Calu3 (cell line): ENCODE measurements at regions of chr1 and their contacts with region 1.

Region 1: DNA sequence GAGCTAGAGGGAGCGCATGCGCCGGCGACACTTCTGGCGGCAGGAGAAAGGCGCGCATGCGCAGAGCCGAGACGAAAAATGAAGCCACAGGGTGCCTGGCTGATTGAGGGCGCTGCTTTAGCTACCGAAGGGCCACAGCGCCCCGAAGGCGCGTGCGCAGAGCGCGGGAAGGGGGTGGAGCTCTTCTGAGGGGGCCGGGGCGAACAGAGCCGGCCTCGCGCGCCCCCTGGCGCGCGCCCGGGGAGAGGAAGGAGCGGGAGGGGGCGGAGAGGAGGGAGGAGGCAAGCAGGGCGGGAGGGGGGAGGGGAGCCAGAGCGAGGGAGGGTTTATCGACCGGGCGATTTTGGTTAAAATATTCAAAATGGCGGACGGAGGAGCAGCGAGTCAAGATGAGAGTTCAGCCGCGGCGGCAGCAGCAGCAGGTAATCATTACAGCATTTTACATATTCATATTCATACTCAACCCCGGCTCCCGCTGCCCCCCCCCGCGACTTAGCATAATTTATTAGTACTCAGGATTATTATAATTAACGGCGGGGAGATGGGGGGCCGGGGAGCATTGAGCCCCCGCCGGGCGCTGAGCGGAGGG is at the start of gene POU2F1:
- DNase-seq: peak; percentile 98
- H3K4me3 Mint-ChIP-seq: peak within 1 kb of the TSS; percentile 79
- H3K27ac Mint-ChIP-seq: peak within 1 kb of the TSS; percentile 87
- H3K4me1 Mint-ChIP-seq: peaks cover 25% of the 10 kb centered on the region
- H3K27me3 Mint-ChIP-seq: no peaks in the 10 kb centered on the region
- CTCF ChIP-seq: peak; percentile 63
- total RNA-seq, gene POU2F1: 25.3 and 25.4 TPM in 2 replicates

Region 2: DNA sequence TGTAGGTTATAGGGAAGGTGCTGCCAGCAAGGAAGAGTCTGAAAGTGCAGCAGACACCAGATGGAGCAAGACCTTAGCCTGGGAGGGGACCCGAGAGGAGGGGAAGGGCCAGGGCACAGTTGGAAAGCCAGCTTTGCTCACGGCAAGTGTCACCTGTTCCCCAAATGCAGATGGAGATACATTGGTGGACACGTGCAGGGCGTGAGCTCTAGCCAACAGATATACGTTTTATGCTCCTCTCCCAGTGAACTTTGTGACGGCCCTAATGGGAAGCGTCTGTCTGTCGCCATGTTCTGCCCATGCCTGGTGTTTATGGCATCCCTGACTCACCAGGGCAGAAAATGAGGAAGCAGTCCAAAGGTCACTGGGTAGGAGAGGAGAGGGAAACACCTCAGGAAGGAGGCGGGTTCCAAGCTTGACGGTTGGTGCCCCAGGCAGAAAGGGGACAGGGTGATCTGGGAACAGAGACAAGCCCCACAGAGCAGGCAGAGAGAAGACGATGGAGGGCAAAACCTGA is 138.1 kb before region 1 on chr1:
- CTCF ChIA-PET with region 1: interaction called, 4 read pairs
- intact Hi-C with region 1: loop called (anchors 5 kb)
- DNase-seq: peak; percentile 77
- H3K4me3 Mint-ChIP-seq: no peak overlapping the region
- H3K27ac Mint-ChIP-seq: no peak overlapping the region
- H3K4me1 Mint-ChIP-seq: peaks cover 13% of the 10 kb centered on the region
- H3K27me3 Mint-ChIP-seq: no peaks in the 10 kb centered on the region
- CTCF ChIP-seq: no peak

Region 3: DNA sequence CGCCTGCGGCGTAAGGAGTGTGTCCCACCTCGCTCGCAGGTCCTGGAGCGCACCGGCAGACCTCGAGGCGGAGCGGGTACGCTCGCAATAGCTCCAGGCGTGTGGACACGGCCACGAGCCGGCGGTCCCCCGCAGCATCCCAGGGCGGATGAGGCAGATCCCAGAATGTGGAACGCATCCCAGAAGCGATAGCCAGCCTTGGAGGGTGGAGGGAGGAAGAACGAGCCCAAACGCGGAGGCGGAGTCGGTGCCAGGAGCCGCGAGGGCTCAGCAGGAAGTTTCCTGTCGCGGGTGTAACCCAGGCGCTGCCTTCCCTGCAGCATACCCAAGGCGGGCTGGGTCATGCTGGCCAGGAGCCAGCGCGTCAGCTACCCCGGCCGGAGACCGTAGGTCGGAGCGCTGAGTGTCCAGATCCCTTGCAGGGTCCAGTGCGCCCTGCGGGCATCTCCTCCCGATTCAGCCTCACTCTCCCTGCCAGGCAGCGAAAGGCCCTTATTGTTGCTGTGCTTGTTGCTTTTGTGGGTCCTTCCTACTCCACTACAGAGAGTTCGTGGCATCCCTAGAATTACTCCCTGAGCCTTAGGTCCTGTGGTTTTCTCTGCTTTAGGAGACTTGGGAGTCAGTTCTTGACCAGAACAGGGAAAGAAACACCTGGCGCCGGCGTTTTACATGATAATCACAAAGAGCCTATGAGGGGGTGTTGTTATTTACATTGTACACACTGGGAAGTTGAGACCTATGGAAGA is 99.1 kb before region 1 on chr1:
- CTCF ChIA-PET with region 1: interaction called, 6 read pairs
- intact Hi-C with region 1: loop called (anchors 1 kb)
- DNase-seq: peak; percentile 84
- H3K4me3 Mint-ChIP-seq: peak overlapping the region; percentile 78
- H3K27ac Mint-ChIP-seq: peak overlapping the region; percentile 17
- H3K4me1 Mint-ChIP-seq: peaks cover 24% of the 10 kb centered on the region
- H3K27me3 Mint-ChIP-seq: peaks cover 15% of the 10 kb centered on the region
- CTCF ChIP-seq: no peak

Region 4: GRCh38 chr1:167165948-167166689 is 54.5 kb before region 1 on chr1:
- CTCF ChIA-PET with region 1: interaction called, 10 read pairs
- intact Hi-C with region 1: loop called (anchors 5 kb)
- DNase-seq: no peak
- H3K4me3 Mint-ChIP-seq: no peak overlapping the region
- H3K27ac Mint-ChIP-seq: no peak overlapping the region
- H3K4me1 Mint-ChIP-seq: peaks cover 26% of the 10 kb centered on the region
- H3K27me3 Mint-ChIP-seq: no peaks in the 10 kb centered on the region
- CTCF ChIP-seq: no peak

Region 5: GRCh38 chr1:167375939-167376338 is 155.3 kb after region 1 on chr1:
- CTCF ChIA-PET with region 1: no interaction called
- intact Hi-C with region 1: no loop called
- DNase-seq: no peak
- H3K4me3 Mint-ChIP-seq: no peak overlapping the region
- H3K27ac Mint-ChIP-seq: no peak overlapping the region
- H3K4me1 Mint-ChIP-seq: no peaks in the 10 kb centered on the region
- H3K27me3 Mint-ChIP-seq: no peaks in the 10 kb centered on the region
- CTCF ChIP-seq: no peak

Region 6: DNA sequence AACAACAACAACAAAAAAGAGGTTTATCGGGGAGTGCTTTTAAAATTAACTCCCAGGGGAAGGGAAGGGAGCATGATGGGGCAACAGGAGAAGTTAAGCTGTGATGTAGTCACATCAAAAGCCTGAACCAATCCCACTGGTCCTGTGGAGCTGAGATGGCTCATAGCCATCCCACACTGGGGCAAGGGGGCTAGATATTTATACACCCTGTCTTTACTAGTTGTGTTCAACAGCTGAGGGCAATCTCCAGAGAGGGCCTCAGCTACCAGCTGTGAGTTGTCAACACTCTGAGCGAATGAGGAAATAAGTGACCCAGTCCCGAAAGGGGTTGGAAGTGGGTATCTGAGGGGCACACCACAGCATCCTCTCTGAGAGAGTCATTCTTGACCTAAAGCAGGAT is 363.9 kb after region 1 on chr1:
- CTCF ChIA-PET with region 1: no interaction called
- intact Hi-C with region 1: no loop called
- DNase-seq: no peak
- H3K4me3 Mint-ChIP-seq: no peak overlapping the region
- H3K27ac Mint-ChIP-seq: no peak overlapping the region
- H3K4me1 Mint-ChIP-seq: no peaks in the 10 kb centered on the region
- H3K27me3 Mint-ChIP-seq: peaks cover 74% of the 10 kb centered on the region
- CTCF ChIP-seq: no peak